ENCODE measurements at regions of chr19 and their contacts with region 1.

Region 1: DNA sequence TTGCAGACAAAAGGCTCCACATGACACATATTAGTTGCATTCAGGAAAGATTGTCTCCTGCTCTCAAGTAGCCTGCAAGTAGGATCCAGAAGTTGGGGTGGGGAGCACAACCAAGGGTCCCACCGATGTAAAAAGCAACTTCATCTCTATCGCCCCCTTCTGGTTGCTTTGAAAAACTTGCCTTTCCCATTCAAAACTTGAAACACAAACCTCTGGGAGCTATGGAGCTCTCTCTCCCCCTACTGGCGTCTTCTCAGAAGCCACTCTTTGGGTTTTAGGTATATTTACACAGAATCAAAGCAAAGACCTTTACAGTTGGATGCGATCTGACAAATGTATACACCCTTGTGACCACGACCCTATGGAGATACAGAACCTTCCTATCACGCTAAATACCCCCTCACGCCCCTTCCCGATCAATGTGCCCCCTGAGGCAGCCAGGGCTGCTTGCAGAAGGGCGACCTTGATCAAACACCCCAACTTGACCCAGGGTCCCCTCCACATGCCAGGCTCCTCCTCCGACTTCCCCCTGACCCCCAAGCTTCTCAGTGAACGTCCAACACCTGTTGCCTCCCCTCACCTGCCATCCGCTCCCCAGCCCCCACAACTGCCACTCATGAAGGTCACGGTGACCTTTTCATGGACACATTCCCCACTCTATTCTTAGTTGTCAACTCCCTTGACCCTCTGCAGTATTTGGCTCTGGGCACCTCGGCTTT is 10.1 kb downstream of the NOSIP start:
- DNase-seq: peak; percentile 73
- H3K4me3 ChIP-seq: no peak overlapping the region
- H3K27ac ChIP-seq: no peak overlapping the region
- H3K27me3 ChIP-seq: no peaks in the 10 kb centered on the region
- CTCF ChIP-seq: peak; percentile 99

Region 2: GRCh38 chr19:49473868-49474544 is 96.3 kb before region 1 on chr19 and contains the start of gene FLT3LG:
- CTCF ChIA-PET with region 1: interaction called, 30 read pairs
- POLR2A ChIA-PET with region 1: no interaction called
- DNase-seq: no peak
- H3K4me3 ChIP-seq: peak within 1 kb of the TSS; percentile 72
- H3K27ac ChIP-seq: peak within 1 kb of the TSS; percentile 11
- H3K27me3 ChIP-seq: no peaks in the 10 kb centered on the region
- CTCF ChIP-seq: peak; percentile 96
- polyA plus RNA-seq, gene FLT3LG: 3.7 and 5.9 TPM in 2 replicates

Region 3: GRCh38 chr19:49546825-49547565 is 23.3 kb before region 1 on chr19:
- CTCF ChIA-PET with region 1: interaction called, 33 read pairs
- POLR2A ChIA-PET with region 1: interaction called, 3 read pairs
- DNase-seq: peak; percentile 86
- H3K4me3 ChIP-seq: no peak overlapping the region
- H3K27ac ChIP-seq: no peak overlapping the region
- H3K27me3 ChIP-seq: no peaks in the 10 kb centered on the region
- CTCF ChIP-seq: peak; percentile 91

Region 4: DNA sequence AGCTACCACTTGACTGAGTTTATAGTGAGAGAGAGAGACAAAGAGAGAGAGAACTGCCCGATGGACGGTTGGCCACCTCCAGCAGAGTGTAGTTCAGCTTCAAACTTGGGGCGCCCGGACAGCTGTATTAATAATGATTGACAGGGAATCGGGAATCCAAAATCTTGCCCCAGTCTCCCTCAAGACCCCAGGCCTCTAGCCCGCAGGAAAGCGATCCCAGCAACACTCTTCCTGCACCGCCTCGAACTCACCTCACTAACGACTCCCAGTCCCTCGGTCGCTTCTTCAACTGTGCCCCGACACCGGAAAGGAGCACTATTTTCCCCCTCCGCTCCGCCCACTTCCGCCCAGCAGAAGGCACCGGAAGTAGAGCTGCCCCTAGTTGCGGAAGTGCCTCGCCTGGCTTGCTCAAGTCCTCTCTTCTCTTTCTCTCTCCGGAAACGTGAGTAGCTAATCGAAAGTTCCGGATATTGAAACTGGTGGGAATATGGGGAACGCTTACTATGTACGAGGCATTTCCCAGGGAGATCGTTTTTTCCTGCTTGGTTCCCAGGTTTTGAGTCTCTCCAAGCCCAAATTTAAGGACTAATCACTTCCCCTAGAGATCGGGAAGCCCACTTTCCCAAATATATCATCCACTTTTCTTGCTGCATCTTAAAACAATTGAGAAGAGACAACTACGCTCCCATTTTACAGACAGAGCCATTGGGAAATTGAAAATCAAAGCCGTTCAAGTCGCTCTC is 10.1 kb after region 1 on chr19 and contains the start of gene NOSIP:
- CTCF ChIA-PET with region 1: interaction called, 53 read pairs
- POLR2A ChIA-PET with region 1: interaction called, 6 read pairs
- DNase-seq: peak; percentile 91
- H3K4me3 ChIP-seq: peak within 1 kb of the TSS; percentile 97
- H3K27ac ChIP-seq: peak within 1 kb of the TSS; percentile 54
- H3K27me3 ChIP-seq: no peaks in the 10 kb centered on the region
- CTCF ChIP-seq: no peak
- polyA plus RNA-seq, gene NOSIP: 43.9 and 77.5 TPM in 2 replicates

Region 5: DNA sequence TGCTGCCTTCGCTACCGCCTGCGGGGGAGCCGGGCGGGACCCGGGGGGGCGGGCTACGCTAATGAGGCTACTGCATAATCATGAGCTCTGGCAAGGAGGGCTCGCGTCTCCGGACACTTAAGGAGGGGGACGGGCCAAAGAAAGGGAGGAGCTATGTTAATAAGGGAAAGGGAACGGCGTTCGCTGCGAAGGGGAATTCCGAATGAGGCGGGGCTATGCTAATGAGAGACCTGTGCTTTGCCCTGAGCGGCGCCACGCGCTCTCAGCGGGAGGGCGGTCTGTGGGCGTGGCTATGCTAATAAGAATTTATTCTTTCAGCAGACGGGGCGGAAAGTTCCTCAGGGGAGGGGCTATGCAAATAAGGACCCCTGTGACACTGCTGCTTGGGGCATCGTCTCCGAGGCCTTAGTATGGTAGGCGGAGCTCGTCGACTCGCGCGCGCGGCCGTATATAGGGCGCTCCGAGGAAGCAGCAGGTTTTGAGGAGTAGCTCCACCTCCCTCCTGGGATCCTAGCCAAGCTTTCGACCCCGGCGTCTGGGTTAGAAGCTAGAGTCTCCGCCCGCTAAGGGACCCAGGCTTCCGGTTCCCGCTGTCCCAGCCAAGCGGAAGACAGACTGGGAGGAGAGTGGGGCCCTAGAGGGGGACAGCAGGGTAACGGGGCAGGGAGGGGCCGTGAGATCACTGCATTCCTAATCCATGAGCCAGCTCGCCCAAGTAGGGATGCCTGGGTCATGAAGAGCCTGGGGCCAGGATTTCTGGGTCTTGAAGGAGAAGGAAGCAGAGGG is 70.0 kb after region 1 on chr19 and contains the start of gene RRAS:
- CTCF ChIA-PET with region 1: interaction called, 10 read pairs
- POLR2A ChIA-PET with region 1: no interaction called
- DNase-seq: peak; percentile 100
- H3K4me3 ChIP-seq: peak within 1 kb of the TSS; percentile 73
- H3K27ac ChIP-seq: peak within 1 kb of the TSS; percentile 100
- H3K27me3 ChIP-seq: no peaks in the 10 kb centered on the region
- CTCF ChIP-seq: no peak
- polyA plus RNA-seq, gene RRAS: 64.2 and 93.3 TPM in 2 replicates